CD8-positive, alpha-beta T cell (primary cell): ENCODE measurements at regions of chr19 and their contacts with region 1.

Region 1: DNA sequence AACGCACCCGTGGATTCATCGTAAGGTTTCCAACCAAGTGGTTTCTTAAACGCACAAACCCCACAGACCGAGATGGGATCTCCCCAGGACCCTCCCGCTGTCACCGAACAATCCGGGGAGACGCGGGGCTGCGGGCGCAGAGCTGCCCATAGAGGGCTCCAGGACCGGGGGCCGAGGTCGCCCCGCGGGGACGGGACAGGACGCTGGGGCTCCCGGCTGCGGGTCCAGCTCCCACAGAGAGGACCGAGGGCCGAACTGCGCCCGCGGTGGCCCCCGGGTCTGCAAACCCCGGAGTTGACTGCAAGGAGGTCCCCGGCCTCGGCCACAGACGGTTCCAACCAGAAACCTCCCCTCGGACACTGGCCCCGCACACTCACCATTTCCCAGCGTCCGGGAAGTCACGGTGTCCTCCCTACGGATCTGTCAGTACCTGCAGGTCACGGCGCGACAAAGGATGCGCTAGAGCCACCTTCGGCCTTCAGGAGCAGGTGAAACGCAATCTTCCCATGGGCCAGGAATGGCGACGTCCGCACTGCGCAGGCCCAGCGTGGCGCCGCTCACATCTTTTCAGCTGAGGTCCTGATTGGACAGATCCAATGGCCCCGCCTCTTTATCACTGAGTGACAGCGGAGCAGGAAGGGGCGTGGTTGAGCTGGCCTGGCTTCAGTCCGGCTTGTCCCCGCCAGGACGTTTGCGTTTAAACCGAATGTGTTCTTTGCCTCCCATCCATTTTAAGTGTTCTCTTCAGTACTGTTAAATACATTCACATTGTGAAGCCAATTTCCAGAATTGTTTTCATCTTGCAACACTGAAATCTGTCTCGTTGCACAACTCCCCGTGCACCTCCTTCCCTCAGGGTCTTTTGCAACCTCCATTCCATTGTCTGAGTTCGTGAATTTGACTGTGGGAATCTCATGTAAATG is at the start of gene ZNF14:
- DNase-seq: peak; percentile 77 to 96 (median 92)
- ATAC-seq: peak; percentile 99
- H3K4me3 ChIP-seq: peak within 1 kb of the TSS; percentile 84 to 99
- H3K4me3 Mint-ChIP-seq: peak within 1 kb of the TSS; percentile 100
- H3K27ac ChIP-seq: peak within 1 kb of the TSS; percentile 79 to 82
- H3K27ac Mint-ChIP-seq: peak within 1 kb of the TSS; percentile 93
- H3K4me1 ChIP-seq: peaks cover 13% of the 10 kb centered on the region
- H3K4me1 Mint-ChIP-seq: peaks cover 29% of the 10 kb centered on the region
- H3K27me3 ChIP-seq: no peaks in the 10 kb centered on the region
- H3K27me3 Mint-ChIP-seq: no peaks in the 10 kb centered on the region
- CTCF ChIP-seq: no peak
- total RNA-seq, gene ZNF14: 40.7 to 44.9 TPM

Region 2: GRCh38 chr19:19597809-19598306 is 135.0 kb before region 1 on chr19:
- CTCF ChIA-PET with region 1: no interaction called
- POLR2A ChIA-PET with region 1: interaction called, 4 read pairs
- intact Hi-C with region 1: loop called in 1 of 2 experiments (anchors 5 kb)
- DNase-seq: peak in 7 of 9 experiments; percentile 22 to 96 (median 62)
- ATAC-seq: peak; percentile 69
- H3K4me3 ChIP-seq: peak overlapping the region in 1 of 2 experiments; percentile 8
- H3K4me3 Mint-ChIP-seq: peak overlapping the region; percentile 37
- H3K27ac ChIP-seq: peak overlapping the region; percentile 94 to 95
- H3K27ac Mint-ChIP-seq: peak overlapping the region; percentile 99
- H3K4me1 ChIP-seq: peaks cover 58% of the 10 kb centered on the region
- H3K4me1 Mint-ChIP-seq: peaks cover 53% of the 10 kb centered on the region
- H3K27me3 ChIP-seq: no peaks in the 10 kb centered on the region
- H3K27me3 Mint-ChIP-seq: no peaks in the 10 kb centered on the region
- CTCF ChIP-seq: no peak

Region 3: DNA sequence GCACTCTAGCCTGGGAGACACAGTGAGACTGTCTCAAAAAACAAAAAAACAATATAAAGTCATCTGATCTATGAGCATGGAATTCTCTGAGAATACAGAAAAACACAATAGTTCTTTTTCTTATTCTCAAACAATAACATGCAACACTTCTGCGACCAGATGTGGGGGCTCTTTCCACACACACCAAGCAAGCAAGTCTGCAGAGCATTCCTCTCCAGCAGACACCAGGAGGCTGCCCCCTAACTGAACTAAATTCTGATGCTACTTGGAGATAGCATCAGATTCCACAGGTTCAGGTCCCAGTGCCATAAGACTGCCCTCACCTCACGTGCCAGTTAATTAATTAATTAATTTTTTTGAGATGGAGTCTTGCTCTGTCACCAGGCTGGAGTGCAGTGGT is 36.5 kb before region 1 on chr19:
- CTCF ChIA-PET with region 1: no interaction called
- POLR2A ChIA-PET with region 1: no interaction called
- intact Hi-C with region 1: loop called in 1 of 2 experiments (anchors 2 kb)
- DNase-seq: no peak
- ATAC-seq: no peak
- H3K4me3 ChIP-seq: no peak overlapping the region
- H3K4me3 Mint-ChIP-seq: no peak overlapping the region
- H3K27ac ChIP-seq: no peak overlapping the region
- H3K27ac Mint-ChIP-seq: no peak overlapping the region
- H3K4me1 ChIP-seq: no peaks in the 10 kb centered on the region
- H3K4me1 Mint-ChIP-seq: peaks cover 1% of the 10 kb centered on the region
- H3K27me3 ChIP-seq: no peaks in the 10 kb centered on the region
- H3K27me3 Mint-ChIP-seq: no peaks in the 10 kb centered on the region
- CTCF ChIP-seq: no peak

Region 4: DNA sequence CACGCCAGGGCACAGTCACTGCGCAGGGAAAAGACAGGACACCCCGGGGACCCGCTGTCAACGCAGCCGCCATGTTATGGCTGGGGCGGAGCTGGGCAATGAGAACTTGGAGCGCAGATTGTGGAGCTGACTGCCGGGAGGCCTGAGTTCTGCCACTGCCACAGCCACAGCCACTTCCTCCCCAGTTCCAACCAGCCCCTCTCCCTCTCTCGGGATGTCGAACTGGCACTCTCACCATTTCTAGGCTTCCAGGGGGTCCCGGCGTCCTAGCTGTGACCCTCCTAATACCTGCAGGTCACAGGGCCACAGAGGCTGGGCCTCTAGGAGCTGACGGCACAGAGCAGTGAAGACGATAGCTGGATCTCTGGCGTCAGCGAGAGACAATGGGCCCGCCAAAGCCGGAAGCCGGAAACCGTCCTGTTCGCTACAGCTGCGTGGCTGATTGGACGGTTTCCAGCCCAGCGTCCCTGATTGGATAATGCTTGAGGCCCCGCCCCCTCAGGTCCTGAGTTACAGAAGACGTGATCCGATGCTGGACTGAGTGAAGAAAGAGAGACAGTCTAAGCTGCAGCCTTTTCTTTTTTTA is 88.6 kb after region 1 on chr19 and contains the start of gene ZNF506:
- CTCF ChIA-PET with region 1: interaction called, 3 read pairs
- POLR2A ChIA-PET with region 1: interaction called, 11 read pairs
- intact Hi-C with region 1: loop called in 1 of 2 experiments (anchors 2 kb)
- DNase-seq: peak; percentile 95 to 99 (median 97)
- ATAC-seq: peak; percentile 82
- H3K4me3 ChIP-seq: peak within 1 kb of the TSS; percentile 91 to 97
- H3K4me3 Mint-ChIP-seq: peak within 1 kb of the TSS; percentile 100
- H3K27ac ChIP-seq: peak within 1 kb of the TSS; percentile 96 to 98
- H3K27ac Mint-ChIP-seq: peak within 1 kb of the TSS; percentile 100
- H3K4me1 ChIP-seq: peaks cover 33% of the 10 kb centered on the region
- H3K4me1 Mint-ChIP-seq: peaks cover 38% of the 10 kb centered on the region
- H3K27me3 ChIP-seq: no peaks in the 10 kb centered on the region
- H3K27me3 Mint-ChIP-seq: no peaks in the 10 kb centered on the region
- CTCF ChIP-seq: no peak
- total RNA-seq, gene ZNF506: 50.2 to 50.4 TPM

Region 5: GRCh38 chr19:19865739-19866481 is 133.1 kb after region 1 on chr19 and contains the start of gene ZNF253:
- CTCF ChIA-PET with region 1: no interaction called
- POLR2A ChIA-PET with region 1: interaction called, 16 read pairs
- intact Hi-C with region 1: loop called in 1 of 2 experiments (anchors 5 kb)
- DNase-seq: peak; percentile 88 to 97 (median 95)
- ATAC-seq: peak; percentile 93
- H3K4me3 ChIP-seq: peak within 1 kb of the TSS; percentile 89 to 99
- H3K4me3 Mint-ChIP-seq: peak within 1 kb of the TSS; percentile 100
- H3K27ac ChIP-seq: peak within 1 kb of the TSS; percentile 89 to 91
- H3K27ac Mint-ChIP-seq: peak within 1 kb of the TSS; percentile 98
- H3K4me1 ChIP-seq: peaks cover 22% of the 10 kb centered on the region
- H3K4me1 Mint-ChIP-seq: peaks cover 39% of the 10 kb centered on the region
- H3K27me3 ChIP-seq: no peaks in the 10 kb centered on the region
- H3K27me3 Mint-ChIP-seq: no peaks in the 10 kb centered on the region
- CTCF ChIP-seq: no peak
- total RNA-seq, gene ZNF253: 2.6 to 3.2 TPM

Region 6: GRCh38 chr19:19900729-19901444 is 168.0 kb after region 1 on chr19 and contains the start of gene ZNF93:
- CTCF ChIA-PET with region 1: no interaction called
- POLR2A ChIA-PET with region 1: interaction called, 4 read pairs
- intact Hi-C with region 1: loop called in 1 of 2 experiments (anchors 1 kb)
- DNase-seq: peak; percentile 83 to 95 (median 91)
- ATAC-seq: peak; percentile 97
- H3K4me3 ChIP-seq: peak within 1 kb of the TSS; percentile 86 to 95
- H3K4me3 Mint-ChIP-seq: peak within 1 kb of the TSS; percentile 94
- H3K27ac ChIP-seq: peak within 1 kb of the TSS; percentile 46 to 75
- H3K27ac Mint-ChIP-seq: peak within 1 kb of the TSS; percentile 91
- H3K4me1 ChIP-seq: peaks cover 10% of the 10 kb centered on the region
- H3K4me1 Mint-ChIP-seq: peaks cover 38% of the 10 kb centered on the region
- H3K27me3 ChIP-seq: no peaks in the 10 kb centered on the region
- H3K27me3 Mint-ChIP-seq: no peaks in the 10 kb centered on the region
- CTCF ChIP-seq: no peak
- total RNA-seq, gene ZNF93: 5.9 to 6.8 TPM